ENCODE measurements at regions of chr10 and their contacts with region 1.

Region 1: DNA sequence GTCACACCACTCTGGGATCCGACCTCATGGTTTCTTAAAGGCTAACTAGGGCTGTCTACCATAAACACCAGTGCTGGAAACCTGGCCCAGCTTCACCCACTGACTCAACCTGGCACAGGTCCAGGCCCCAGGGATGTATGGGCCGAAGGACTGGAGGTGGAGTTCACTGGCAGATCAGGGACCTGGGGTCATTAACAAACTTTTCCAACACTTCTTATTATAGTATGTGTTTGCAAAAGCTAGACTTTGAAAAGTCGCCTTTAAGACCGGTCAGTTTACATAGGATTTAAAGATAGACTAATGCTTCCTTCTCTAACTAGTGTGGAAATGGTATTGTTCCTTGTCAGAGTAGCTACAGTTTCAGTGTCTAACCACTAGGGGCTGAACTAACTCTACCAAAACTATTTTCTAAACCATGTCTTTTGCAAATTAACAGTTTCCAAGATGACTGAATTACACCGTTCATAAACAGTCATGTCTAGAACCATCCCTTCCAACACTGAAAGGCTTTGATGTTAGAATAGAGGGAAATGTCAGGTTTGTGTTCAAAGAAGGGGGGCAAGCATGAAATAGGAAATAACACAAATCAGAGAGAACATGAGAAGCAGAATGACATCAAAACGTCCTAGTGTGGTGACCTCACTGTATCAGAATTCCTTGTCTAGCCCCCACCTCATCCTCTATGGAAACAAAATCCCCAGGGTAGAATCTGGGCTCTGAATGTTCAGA is 29.7 kb downstream of the STN1 start:
- DNase-seq: peak; percentile 61
- ATAC-seq: peak; percentile 68
- H3K4me3 ChIP-seq: no peak overlapping the region
- H3K27ac ChIP-seq: peak overlapping the region; percentile 7
- H3K4me1 ChIP-seq: peaks cover 43 to 52% of the 10 kb centered on the region in 2 experiments
- H3K27me3 ChIP-seq: no peaks in the 10 kb centered on the region
- CTCF ChIP-seq: peak in 2 of 3 experiments; percentile 85 to 99; a peak in 4 of 6 replicates
- POLR2A ChIP-seq: no peak
- RAD21 ChIP-seq: no peak

Region 2: GRCh38 chr10:103712570-103713498 is 175.4 kb before region 1 on chr10:
- CTCF ChIA-PET with region 1: interaction called, 48 read pairs
- POLR2A ChIA-PET with region 1: interaction called, 3 read pairs
- RAD21 ChIA-PET with region 1: interaction called, 7 to 8 read pairs
- intact Hi-C with region 1: loop called (anchors 1 kb)
- DNase-seq: peak; percentile 75
- ATAC-seq: peak; percentile 75
- H3K4me3 ChIP-seq: no peak overlapping the region
- H3K27ac ChIP-seq: no peak overlapping the region
- H3K4me1 ChIP-seq: peaks cover 36 to 51% of the 10 kb centered on the region in 2 experiments
- H3K27me3 ChIP-seq: no peaks in the 10 kb centered on the region
- CTCF ChIP-seq: peak in 2 of 3 experiments; percentile 84 to 99; a peak in 4 of 6 replicates
- POLR2A ChIP-seq: no peak
- RAD21 ChIP-seq: no peak

Region 3: DNA sequence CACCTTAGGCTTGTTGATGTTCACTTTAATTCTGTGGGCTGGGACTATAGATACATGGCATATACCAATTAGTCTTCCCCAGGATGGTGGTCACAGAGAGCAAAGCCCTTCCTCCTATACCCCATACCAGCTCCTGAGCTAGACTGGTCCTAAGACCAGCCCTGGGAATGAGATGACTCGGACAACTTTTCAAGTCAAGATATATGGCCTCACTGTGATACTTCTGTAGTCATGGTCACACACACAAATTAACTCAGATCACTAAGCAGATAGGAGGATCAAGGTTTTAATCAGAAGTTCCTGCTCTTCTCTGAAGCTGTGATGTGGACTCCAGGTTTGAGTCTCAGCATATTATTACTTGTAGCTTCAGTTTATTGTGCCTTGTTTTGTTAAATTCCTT is 131.7 kb after region 1 on chr10:
- CTCF ChIA-PET with region 1: interaction called, 5 read pairs
- POLR2A ChIA-PET with region 1: no interaction called
- RAD21 ChIA-PET with region 1: no interaction called
- intact Hi-C with region 1: loop called (anchors 5 kb)
- DNase-seq: no peak
- ATAC-seq: no peak
- H3K4me3 ChIP-seq: no peak overlapping the region
- H3K27ac ChIP-seq: no peak overlapping the region
- H3K4me1 ChIP-seq: peaks cover 7 to 27% of the 10 kb centered on the region in 2 experiments; a peak in 3 of 4 replicates
- H3K27me3 ChIP-seq: no peaks in the 10 kb centered on the region
- CTCF ChIP-seq: no peak
- POLR2A ChIP-seq: no peak
- RAD21 ChIP-seq: no peak

Region 4: DNA sequence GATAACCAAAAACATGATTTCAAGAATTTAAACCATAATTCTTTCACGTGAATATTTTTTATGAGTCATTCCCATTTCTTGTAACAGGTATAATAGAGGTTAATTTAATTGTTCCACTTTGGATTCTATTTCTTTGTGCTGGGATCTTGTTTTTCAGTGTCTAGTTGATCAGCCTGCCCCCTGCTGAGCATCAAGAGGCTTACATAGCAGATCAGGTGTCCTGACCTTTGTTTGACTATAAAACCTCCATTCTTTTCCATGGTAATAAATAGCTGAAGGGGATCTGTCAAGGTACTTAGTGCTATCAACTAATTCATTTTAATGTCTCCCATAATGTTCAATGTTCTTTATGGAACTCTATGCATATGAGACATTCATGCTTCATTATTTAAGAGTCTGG is 192.5 kb after region 1 on chr10:
- CTCF ChIA-PET with region 1: interaction called, 6 read pairs
- POLR2A ChIA-PET with region 1: interaction called, 3 read pairs
- RAD21 ChIA-PET with region 1: no interaction called
- intact Hi-C with region 1: loop called (anchors 1 kb)
- DNase-seq: peak; percentile 59
- ATAC-seq: peak; percentile 78
- H3K4me3 ChIP-seq: no peak overlapping the region
- H3K27ac ChIP-seq: no peak overlapping the region
- H3K4me1 ChIP-seq: peaks cover 14 to 26% of the 10 kb centered on the region in 2 experiments
- H3K27me3 ChIP-seq: no peaks in the 10 kb centered on the region
- CTCF ChIP-seq: peak; percentile 60 to 69 (median 63); a peak in 5 of 6 replicates
- POLR2A ChIP-seq: no peak
- RAD21 ChIP-seq: peak; percentile 60

Region 5: GRCh38 chr10:104139221-104139620 is 250.9 kb after region 1 on chr10:
- CTCF ChIA-PET with region 1: no interaction called
- POLR2A ChIA-PET with region 1: no interaction called
- RAD21 ChIA-PET with region 1: no interaction called
- intact Hi-C with region 1: no loop called
- DNase-seq: no peak
- ATAC-seq: peak; percentile 84
- H3K4me3 ChIP-seq: no peak overlapping the region
- H3K27ac ChIP-seq: no peak overlapping the region
- H3K4me1 ChIP-seq: no peaks in the 10 kb centered on the region
- H3K27me3 ChIP-seq: no peaks in the 10 kb centered on the region
- CTCF ChIP-seq: peak; percentile 52 to 86 (median 80); a peak in 5 of 6 replicates
- POLR2A ChIP-seq: no peak
- RAD21 ChIP-seq: peak; percentile 77

Region 6: DNA sequence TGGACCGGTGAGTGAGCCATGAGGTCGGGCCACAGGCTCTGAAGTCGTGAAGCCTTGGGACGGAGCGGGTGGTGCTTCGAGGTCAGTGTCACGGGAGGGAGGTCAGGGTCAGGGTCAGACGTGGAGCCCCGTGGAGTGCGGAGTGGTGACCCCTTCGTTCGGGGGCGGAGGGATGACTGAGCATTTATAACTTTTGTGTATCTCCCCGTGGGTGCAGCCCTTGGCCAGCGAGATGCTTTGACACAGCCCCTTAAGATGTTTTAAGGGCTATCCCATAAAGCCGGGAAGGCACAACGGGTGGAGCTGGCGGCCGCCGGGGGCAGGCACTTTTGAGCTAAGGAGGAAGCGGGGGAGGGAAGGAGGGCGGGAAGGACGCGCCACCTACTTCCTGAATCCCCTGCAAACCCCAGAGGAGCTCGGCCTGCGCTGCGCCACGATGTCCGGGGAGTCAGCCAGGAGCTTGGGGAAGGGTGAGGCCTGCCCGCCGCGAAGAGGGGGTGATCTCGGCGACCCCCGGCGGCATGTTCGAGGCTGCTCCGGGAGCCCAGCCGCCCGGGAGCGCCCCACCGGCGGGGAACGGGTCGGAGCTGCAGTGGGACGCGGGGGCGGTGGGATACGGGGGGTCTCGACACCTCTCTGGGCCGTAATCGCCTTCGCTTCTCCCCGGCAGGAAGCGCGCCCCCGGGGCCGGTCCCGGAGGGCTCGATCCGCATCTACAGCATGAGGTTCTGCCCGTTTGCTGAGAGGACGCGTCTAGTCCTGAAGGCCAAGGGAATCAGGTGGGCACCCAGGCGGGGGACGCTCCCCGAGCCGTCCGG is 366.4 kb after region 1 on chr10 and contains the start of gene GSTO1:
- CTCF ChIA-PET with region 1: interaction called, 8 read pairs
- POLR2A ChIA-PET with region 1: interaction called, 3 read pairs
- RAD21 ChIA-PET with region 1: interaction called in 1 of 2 experiments, 3 read pairs
- intact Hi-C with region 1: loop called (anchors 5 kb)
- DNase-seq: peak; percentile 51
- ATAC-seq: peak; percentile 93
- H3K4me3 ChIP-seq: peak within 1 kb of the TSS; percentile 68 to 73
- H3K27ac ChIP-seq: peak within 1 kb of the TSS; percentile 76
- H3K4me1 ChIP-seq: peaks cover 14 to 29% of the 10 kb centered on the region in 2 experiments
- H3K27me3 ChIP-seq: no peaks in the 10 kb centered on the region
- CTCF ChIP-seq: no peak
- POLR2A ChIP-seq: peak; percentile 79
- RAD21 ChIP-seq: no peak
- total RNA-seq, gene GSTO1: 179 TPM

Region 7: DNA sequence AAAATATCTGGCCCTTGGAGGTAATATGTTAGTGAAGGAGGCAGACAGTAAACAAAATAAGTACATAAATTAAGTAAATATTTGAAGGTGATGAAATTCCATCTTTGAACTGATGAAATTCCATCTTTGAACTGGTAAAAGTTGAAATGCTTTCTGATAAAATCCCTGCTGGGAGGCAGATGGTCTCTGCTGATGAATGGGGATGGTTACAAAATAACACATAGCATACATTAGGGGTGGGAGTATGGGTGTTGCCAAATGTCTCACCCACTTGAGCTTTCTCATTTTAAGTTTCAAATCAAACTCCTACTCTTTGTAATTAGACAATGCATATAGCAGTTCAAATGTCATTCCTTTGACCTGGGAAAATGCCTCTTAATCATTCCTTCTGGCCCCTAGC is 675.3 kb after region 1 on chr10:
- CTCF ChIA-PET with region 1: no interaction called
- POLR2A ChIA-PET with region 1: no interaction called
- RAD21 ChIA-PET with region 1: no interaction called
- intact Hi-C with region 1: no loop called
- DNase-seq: no peak
- ATAC-seq: no peak
- H3K4me3 ChIP-seq: no peak overlapping the region
- H3K27ac ChIP-seq: no peak overlapping the region
- H3K4me1 ChIP-seq: no peaks in the 10 kb centered on the region
- H3K27me3 ChIP-seq: peaks cover 37% of the 10 kb centered on the region
- CTCF ChIP-seq: no peak
- POLR2A ChIP-seq: no peak
- RAD21 ChIP-seq: no peak

Region 8: DNA sequence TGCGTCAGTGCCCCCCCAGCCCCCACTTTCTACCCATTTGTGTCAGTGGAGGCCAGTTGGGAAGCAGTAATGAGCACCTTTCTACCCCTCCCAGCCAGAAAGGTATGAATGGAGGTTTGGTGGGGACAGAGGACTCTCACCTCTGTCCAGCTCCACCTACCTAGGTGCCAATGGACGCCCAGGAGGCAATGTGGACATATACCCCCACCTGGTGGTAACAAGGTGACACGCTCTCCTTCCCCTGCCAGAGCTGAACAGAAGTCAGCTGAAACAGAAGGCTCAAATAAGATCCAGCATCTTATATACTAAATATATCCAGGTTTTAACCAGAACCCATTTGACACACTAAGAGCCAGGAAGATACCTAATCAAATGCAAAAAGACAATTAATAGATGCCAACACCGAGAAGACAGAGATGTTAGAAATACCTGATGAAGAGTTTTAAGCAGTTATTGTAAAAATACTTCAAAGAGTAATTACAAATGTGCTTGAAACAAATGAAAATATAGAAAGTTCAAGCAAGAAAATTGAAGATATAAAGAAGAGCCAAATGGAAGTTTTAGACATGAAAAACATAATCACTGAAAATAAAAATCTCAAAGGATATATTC is 734.4 kb after region 1 on chr10:
- CTCF ChIA-PET with region 1: interaction called, 4 read pairs
- POLR2A ChIA-PET with region 1: no interaction called
- RAD21 ChIA-PET with region 1: no interaction called
- intact Hi-C with region 1: loop called (anchors 5 kb)
- DNase-seq: peak; percentile 55
- ATAC-seq: peak; percentile 99
- H3K4me3 ChIP-seq: no peak overlapping the region
- H3K27ac ChIP-seq: no peak overlapping the region
- H3K4me1 ChIP-seq: no peaks in the 10 kb centered on the region
- H3K27me3 ChIP-seq: peaks cover 50% of the 10 kb centered on the region
- CTCF ChIP-seq: peak; percentile 87 to 97 (median 93)
- POLR2A ChIP-seq: no peak
- RAD21 ChIP-seq: peak; percentile 93

Measured in HCT116 (cell line).